ENCODE measurements at regions of chr15 and their contacts with region 1.

Region 1: GRCh38 chr15:71443538-71443937 is 328.3 kb downstream of the THSD4 start:
- DNase-seq: peak; percentile 61
- ATAC-seq: 0 out of 2 replicates have a peak, but pooled peaks have one; percentile 60
- H3K4me3 ChIP-seq: no peak overlapping the region
- H3K27ac ChIP-seq: no peak overlapping the region
- H3K4me1 ChIP-seq: peaks cover 16% of the 10 kb centered on the region
- H3K27me3 ChIP-seq: no peaks in the 10 kb centered on the region
- CTCF ChIP-seq: peak; percentile 94

Region 2: GRCh38 chr15:70974004-70974832 is 469.3 kb before region 1 on chr15:
- CTCF ChIA-PET with region 1: interaction called, 3 read pairs
- POLR2A ChIA-PET with region 1: no interaction called
- in situ Hi-C with region 1: no loop called
- intact Hi-C with region 1: loop called (anchors 5 kb)
- DNase-seq: peak; percentile 15
- ATAC-seq: peak; percentile 62; the same call in 1 of the 2 replicates
- H3K4me3 ChIP-seq: no peak overlapping the region
- H3K27ac ChIP-seq: no peak overlapping the region
- H3K4me1 ChIP-seq: no peaks in the 10 kb centered on the region
- H3K27me3 ChIP-seq: no peaks in the 10 kb centered on the region
- CTCF ChIP-seq: peak; percentile 74

Region 3: GRCh38 chr15:71011503-71012155 is 431.9 kb before region 1 on chr15:
- CTCF ChIA-PET with region 1: interaction called, 5 read pairs
- POLR2A ChIA-PET with region 1: no interaction called
- in situ Hi-C with region 1: no loop called
- intact Hi-C with region 1: loop called (anchors 2 kb)
- DNase-seq: peak; percentile 32
- ATAC-seq: peak; percentile 94
- H3K4me3 ChIP-seq: no peak overlapping the region
- H3K27ac ChIP-seq: peak overlapping the region; percentile 65; the same call in 1 of the 2 replicates
- H3K4me1 ChIP-seq: peaks cover 6% of the 10 kb centered on the region; the same call in 1 of the 2 replicates
- H3K27me3 ChIP-seq: no peaks in the 10 kb centered on the region
- CTCF ChIP-seq: peak; percentile 86; the same call in 1 of the 2 replicates

Region 4: GRCh38 chr15:71114896-71115554 is 328.5 kb before region 1 on chr15 and contains the start of gene THSD4:
- CTCF ChIA-PET with region 1: no interaction called
- POLR2A ChIA-PET with region 1: no interaction called
- in situ Hi-C with region 1: no loop called
- intact Hi-C with region 1: loop called (anchors 5 kb)
- DNase-seq: no peak
- ATAC-seq: peak; percentile 79
- H3K4me3 ChIP-seq: peak within 1 kb of the TSS; percentile 72 to 85
- H3K27ac ChIP-seq: peak within 1 kb of the TSS; percentile 98
- H3K4me1 ChIP-seq: peaks cover 76% of the 10 kb centered on the region
- H3K27me3 ChIP-seq: no peaks in the 10 kb centered on the region
- CTCF ChIP-seq: peak; percentile 98
- total RNA-seq, gene THSD4: 65.4 TPM

Region 5: GRCh38 chr15:71386448-71387236 is 56.9 kb before region 1 on chr15:
- CTCF ChIA-PET with region 1: interaction called, 4 read pairs
- POLR2A ChIA-PET with region 1: interaction called, 3 read pairs
- in situ Hi-C with region 1: no loop called
- intact Hi-C with region 1: loop called (anchors 5 kb)
- DNase-seq: no peak
- ATAC-seq: no peak
- H3K4me3 ChIP-seq: no peak overlapping the region
- H3K27ac ChIP-seq: no peak overlapping the region
- H3K4me1 ChIP-seq: no peaks in the 10 kb centered on the region; the same call in 1 of the 2 replicates
- H3K27me3 ChIP-seq: no peaks in the 10 kb centered on the region
- CTCF ChIP-seq: peak; percentile 29; the same call in 1 of the 2 replicates

Region 6: GRCh38 chr15:71411538-71412482 is 31.7 kb before region 1 on chr15:
- CTCF ChIA-PET with region 1: no interaction called
- POLR2A ChIA-PET with region 1: no interaction called
- in situ Hi-C with region 1: no loop called
- intact Hi-C with region 1: no loop called
- DNase-seq: no peak
- ATAC-seq: no peak
- H3K4me3 ChIP-seq: no peak overlapping the region
- H3K27ac ChIP-seq: no peak overlapping the region
- H3K4me1 ChIP-seq: peaks cover 3% of the 10 kb centered on the region; the same call in 1 of the 2 replicates
- H3K27me3 ChIP-seq: no peaks in the 10 kb centered on the region
- CTCF ChIP-seq: no peak

Region 7: GRCh38 chr15:71599418-71600151 is 156.0 kb after region 1 on chr15:
- CTCF ChIA-PET with region 1: no interaction called
- POLR2A ChIA-PET with region 1: no interaction called
- in situ Hi-C with region 1: no loop called
- intact Hi-C with region 1: no loop called
- DNase-seq: no peak
- ATAC-seq: no peak
- H3K4me3 ChIP-seq: no peak overlapping the region
- H3K27ac ChIP-seq: no peak overlapping the region
- H3K4me1 ChIP-seq: no peaks in the 10 kb centered on the region
- H3K27me3 ChIP-seq: no peaks in the 10 kb centered on the region
- CTCF ChIP-seq: no peak

Region 8: DNA sequence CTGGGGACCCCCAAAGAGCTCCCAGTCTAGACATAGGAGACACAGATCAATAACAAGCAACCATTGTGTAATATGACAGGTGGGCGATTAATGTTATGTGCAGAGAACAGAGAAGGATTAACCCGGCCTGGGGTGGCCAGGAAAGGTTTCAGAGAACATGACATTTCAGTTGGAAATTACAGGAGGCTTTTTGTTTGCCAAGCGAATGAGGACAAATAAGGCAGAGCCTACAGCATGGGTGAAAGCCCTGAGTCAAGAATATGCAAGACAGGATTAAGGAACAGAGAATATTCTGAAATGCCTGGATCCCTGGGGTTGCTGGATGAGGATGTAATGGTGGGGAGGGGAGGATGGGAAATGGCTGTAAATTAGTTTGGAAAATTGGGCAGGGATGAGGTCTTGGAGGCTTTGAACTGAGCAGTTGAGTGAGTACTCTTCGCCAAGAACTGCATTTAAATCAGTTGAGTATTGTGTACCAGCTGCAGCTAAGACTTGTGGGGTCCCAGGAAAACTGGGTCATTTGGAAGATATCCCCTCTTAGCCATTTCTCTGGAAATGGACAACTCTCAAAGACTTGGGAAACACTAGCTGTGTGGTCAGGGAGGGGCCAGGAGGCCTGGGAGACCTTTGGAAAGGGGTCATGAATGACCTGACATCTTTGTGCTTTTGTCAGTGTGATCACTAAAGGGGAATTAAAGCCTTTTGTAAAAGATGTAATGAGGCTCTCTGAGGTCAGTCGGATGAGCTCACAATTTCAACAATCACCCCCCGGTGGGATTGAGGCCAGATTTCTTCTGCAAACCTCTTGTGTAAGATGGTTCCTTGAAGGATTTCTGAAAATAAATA is 168.2 kb after region 1 on chr15:
- CTCF ChIA-PET with region 1: no interaction called
- POLR2A ChIA-PET with region 1: no interaction called
- in situ Hi-C with region 1: no loop called
- intact Hi-C with region 1: no loop called
- DNase-seq: no peak
- ATAC-seq: no peak
- H3K4me3 ChIP-seq: no peak overlapping the region
- H3K27ac ChIP-seq: no peak overlapping the region
- H3K4me1 ChIP-seq: no peaks in the 10 kb centered on the region
- H3K27me3 ChIP-seq: no peaks in the 10 kb centered on the region
- CTCF ChIP-seq: no peak

Region 9: DNA sequence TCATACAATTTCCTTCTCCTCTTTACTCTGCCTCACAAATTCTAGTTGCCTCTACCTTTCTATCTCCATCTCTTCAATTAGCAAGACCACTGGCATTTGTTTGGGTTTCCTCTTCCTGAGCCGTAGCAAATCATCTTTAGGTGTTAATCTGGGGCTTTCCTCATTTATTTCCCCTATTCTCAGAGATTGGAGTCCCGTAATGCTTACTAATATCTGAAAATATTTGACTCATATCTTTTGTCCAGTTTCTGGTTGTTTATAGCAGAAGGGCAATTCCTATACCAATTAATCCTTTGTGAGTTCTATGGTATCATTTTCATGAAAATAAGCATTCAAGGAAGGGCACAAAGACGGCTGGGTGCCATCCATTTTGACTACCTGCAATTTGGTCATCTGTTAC is 470.6 kb after region 1 on chr15:
- CTCF ChIA-PET with region 1: no interaction called
- POLR2A ChIA-PET with region 1: no interaction called
- in situ Hi-C with region 1: no loop called
- intact Hi-C with region 1: no loop called
- DNase-seq: no peak
- ATAC-seq: no peak
- H3K4me3 ChIP-seq: no peak overlapping the region
- H3K27ac ChIP-seq: no peak overlapping the region
- H3K4me1 ChIP-seq: no peaks in the 10 kb centered on the region
- H3K27me3 ChIP-seq: no peaks in the 10 kb centered on the region
- CTCF ChIP-seq: no peak

Measured in Panc1 (cell line).